CD4-positive, alpha-beta memory T cell (primary cell): ENCODE measurements at regions of chr12 and their contacts with region 1.

Region 1: GRCh38 chr12:12486661-12487240 is 75.9 kb downstream of the DUSP16 start:
- DNase-seq: no peak
- H3K4me3 ChIP-seq: no peak overlapping the region
- H3K4me3 Mint-ChIP-seq: peak overlapping the region in 6 of 8 donors; percentile 14 to 65 (median 28)
- H3K27ac ChIP-seq: peak overlapping the region; percentile 40
- H3K27ac Mint-ChIP-seq: peak overlapping the region; percentile 84 to 99 (median 92)
- H3K4me1 ChIP-seq: peaks cover 78% of the 10 kb centered on the region
- H3K4me1 Mint-ChIP-seq: peaks cover 36 to 70% (median 56%) of the 10 kb centered on the region in 4 donors
- H3K27me3 ChIP-seq: no peaks in the 10 kb centered on the region
- H3K27me3 Mint-ChIP-seq: no peaks in the 10 kb centered on the region

Region 2: GRCh38 chr12:11986165-11986564 is 500.6 kb before region 1 on chr12:
- CTCF ChIA-PET with region 1: no interaction called
- POLR2A ChIA-PET with region 1: no interaction called
- intact Hi-C with region 1: no loop called
- DNase-seq: no peak
- H3K4me3 ChIP-seq: no peak overlapping the region
- H3K4me3 Mint-ChIP-seq: no peak overlapping the region
- H3K27ac ChIP-seq: no peak overlapping the region
- H3K27ac Mint-ChIP-seq: peak overlapping the region in 3 of 7 donors; percentile 0 to 47 (median 21)
- H3K4me1 ChIP-seq: peaks cover 31% of the 10 kb centered on the region
- H3K4me1 Mint-ChIP-seq: peaks cover 26 to 33% (median 31%) of the 10 kb centered on the region in 4 donors
- H3K27me3 ChIP-seq: no peaks in the 10 kb centered on the region
- H3K27me3 Mint-ChIP-seq: no peaks in the 10 kb centered on the region

Region 3: GRCh38 chr12:12091977-12092663 is 394.6 kb before region 1 on chr12:
- CTCF ChIA-PET with region 1: no interaction called
- POLR2A ChIA-PET with region 1: no interaction called
- intact Hi-C with region 1: no loop called
- DNase-seq: no peak
- H3K4me3 ChIP-seq: no peak overlapping the region
- H3K4me3 Mint-ChIP-seq: no peak overlapping the region
- H3K27ac ChIP-seq: no peak overlapping the region
- H3K27ac Mint-ChIP-seq: no peak overlapping the region
- H3K4me1 ChIP-seq: no peaks in the 10 kb centered on the region
- H3K4me1 Mint-ChIP-seq: no peaks in the 10 kb centered on the region
- H3K27me3 ChIP-seq: no peaks in the 10 kb centered on the region
- H3K27me3 Mint-ChIP-seq: peaks cover 0 to 5% of the 10 kb centered on the region in 2 donors

Region 4: GRCh38 chr12:12384571-12385340 is 102.0 kb before region 1 on chr12:
- CTCF ChIA-PET with region 1: interaction called, 41 read pairs
- POLR2A ChIA-PET with region 1: interaction called, 107 read pairs
- intact Hi-C with region 1: loop called (anchors 1 kb)
- DNase-seq: peak in 4 of 5 donors; percentile 46 to 48 (median 47)
- H3K4me3 ChIP-seq: peak overlapping the region in 1 of 2 donors; percentile 9
- H3K4me3 Mint-ChIP-seq: peak overlapping the region; percentile 59 to 85 (median 74)
- H3K27ac ChIP-seq: peak overlapping the region; percentile 50
- H3K27ac Mint-ChIP-seq: peak overlapping the region; percentile 86 to 99 (median 96)
- H3K4me1 ChIP-seq: peaks cover 87% of the 10 kb centered on the region
- H3K4me1 Mint-ChIP-seq: peaks cover 46 to 87% (median 68%) of the 10 kb centered on the region in 4 donors
- H3K27me3 ChIP-seq: no peaks in the 10 kb centered on the region
- H3K27me3 Mint-ChIP-seq: no peaks in the 10 kb centered on the region

Region 5: DNA sequence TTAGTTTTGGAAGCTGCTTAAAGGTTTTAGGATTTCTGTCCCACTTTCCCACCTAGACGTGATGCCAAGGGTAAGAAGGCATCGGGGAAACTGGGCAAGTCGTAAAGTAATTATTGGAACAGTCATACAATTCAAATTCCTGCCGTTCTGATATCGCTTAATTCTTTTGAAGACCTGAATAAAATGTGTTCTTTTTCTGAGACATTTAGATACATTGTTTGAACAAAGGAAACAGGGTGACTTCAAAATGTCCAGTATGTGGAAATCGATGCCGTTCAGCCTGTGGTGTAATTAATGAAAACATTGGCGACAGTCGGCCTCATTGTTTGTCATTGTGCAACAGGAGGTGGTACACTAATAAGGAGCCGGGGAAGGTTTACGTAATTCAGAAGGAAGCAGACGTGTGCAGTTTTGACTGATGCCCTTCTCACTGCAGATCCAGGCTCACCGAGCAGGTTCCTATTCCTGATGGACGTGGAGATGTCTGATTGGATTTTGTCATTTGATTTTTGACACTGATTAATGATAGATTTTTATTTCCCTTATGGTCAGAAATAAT is 37.2 kb before region 1 on chr12:
- CTCF ChIA-PET with region 1: no interaction called
- POLR2A ChIA-PET with region 1: interaction called, 970 read pairs
- intact Hi-C with region 1: no loop called
- DNase-seq: no peak
- H3K4me3 ChIP-seq: no peak overlapping the region
- H3K4me3 Mint-ChIP-seq: no peak overlapping the region
- H3K27ac ChIP-seq: no peak overlapping the region
- H3K27ac Mint-ChIP-seq: peak overlapping the region in 5 of 7 donors; percentile 43 to 75 (median 51)
- H3K4me1 ChIP-seq: peaks cover 30% of the 10 kb centered on the region
- H3K4me1 Mint-ChIP-seq: peaks cover 20 to 49% (median 38%) of the 10 kb centered on the region in 4 donors
- H3K27me3 ChIP-seq: no peaks in the 10 kb centered on the region
- H3K27me3 Mint-ChIP-seq: no peaks in the 10 kb centered on the region

Region 6: GRCh38 chr12:12499909-12500604 is 13.3 kb after region 1 on chr12:
- CTCF ChIA-PET with region 1: interaction called, 8 read pairs
- POLR2A ChIA-PET with region 1: interaction called, 48 read pairs
- intact Hi-C with region 1: loop called (anchors 1 kb)
- DNase-seq: peak in 1 of 5 donors; percentile 44
- H3K4me3 ChIP-seq: no peak overlapping the region
- H3K4me3 Mint-ChIP-seq: peak overlapping the region in 5 of 8 donors; percentile 21 to 50 (median 41)
- H3K27ac ChIP-seq: peak overlapping the region; percentile 27
- H3K27ac Mint-ChIP-seq: peak overlapping the region; percentile 8 to 96 (median 88)
- H3K4me1 ChIP-seq: peaks cover 74% of the 10 kb centered on the region
- H3K4me1 Mint-ChIP-seq: peaks cover 41 to 75% (median 58%) of the 10 kb centered on the region in 4 donors
- H3K27me3 ChIP-seq: no peaks in the 10 kb centered on the region
- H3K27me3 Mint-ChIP-seq: no peaks in the 10 kb centered on the region

Region 7: DNA sequence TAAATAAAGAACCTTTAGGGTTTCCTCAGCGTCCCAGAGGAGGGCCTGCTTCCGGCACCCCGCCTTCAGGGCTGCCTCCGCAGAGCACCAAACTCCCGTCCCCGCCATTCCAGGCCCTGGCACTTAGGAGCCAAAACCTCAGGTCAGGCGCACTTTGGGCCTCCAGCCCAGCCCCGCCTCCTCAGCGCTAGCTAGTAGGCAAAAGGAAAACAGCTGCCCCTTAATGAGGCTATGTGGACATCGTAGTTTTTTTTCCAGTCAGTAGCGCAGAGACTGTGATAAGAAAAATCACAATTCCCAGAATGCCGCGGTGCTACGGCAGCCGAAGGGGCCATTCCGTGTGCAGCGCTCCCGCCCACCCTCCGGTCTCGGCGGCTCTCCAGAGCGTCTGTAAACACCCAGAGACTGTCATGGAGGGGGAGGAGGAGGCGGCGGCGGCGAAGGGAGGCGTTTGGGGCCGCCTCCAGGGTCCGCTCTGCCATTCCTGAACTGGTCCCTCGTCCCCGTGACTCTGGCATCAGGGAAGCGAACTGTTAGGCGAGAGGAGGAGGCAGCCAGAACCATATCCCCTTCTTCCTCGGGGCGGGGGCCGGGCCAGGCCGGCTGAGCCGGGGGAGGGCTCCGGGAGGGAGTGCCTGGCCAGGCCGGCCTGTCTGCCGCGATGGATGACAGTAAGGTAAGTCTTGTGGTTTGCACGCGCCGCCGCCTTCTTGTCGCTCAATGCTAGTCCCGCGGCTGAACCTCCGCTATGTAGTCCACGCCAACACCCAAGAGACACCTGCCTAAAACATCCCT is 125.0 kb after region 1 on chr12 and contains the start of gene CREBL2:
- CTCF ChIA-PET with region 1: no interaction called
- POLR2A ChIA-PET with region 1: interaction called, 4 read pairs
- intact Hi-C with region 1: loop called (anchors 2 kb)
- DNase-seq: peak; percentile 88 to 89 (median 88)
- H3K4me3 ChIP-seq: peak within 1 kb of the TSS; percentile 92 to 97
- H3K4me3 Mint-ChIP-seq: peak within 1 kb of the TSS; percentile 92 to 99 (median 95)
- H3K27ac ChIP-seq: peak within 1 kb of the TSS; percentile 77
- H3K27ac Mint-ChIP-seq: peak within 1 kb of the TSS; percentile 93 to 99 (median 99)
- H3K4me1 ChIP-seq: peaks cover 66% of the 10 kb centered on the region
- H3K4me1 Mint-ChIP-seq: peaks cover 34 to 73% (median 54%) of the 10 kb centered on the region in 4 donors
- H3K27me3 ChIP-seq: no peaks in the 10 kb centered on the region
- H3K27me3 Mint-ChIP-seq: no peaks in the 10 kb centered on the region
- total RNA-seq, gene CREBL2: 51.0 to 52.0 TPM

Region 8: GRCh38 chr12:12696562-12697383 is 210.0 kb after region 1 on chr12:
- CTCF ChIA-PET with region 1: no interaction called
- POLR2A ChIA-PET with region 1: interaction called, 9 read pairs
- intact Hi-C with region 1: loop called (anchors 1 kb)
- DNase-seq: peak; percentile 93 to 96 (median 95)
- H3K4me3 ChIP-seq: peak overlapping the region; percentile 37 to 74
- H3K4me3 Mint-ChIP-seq: peak overlapping the region; percentile 86 to 97 (median 94)
- H3K27ac ChIP-seq: peak overlapping the region; percentile 87
- H3K27ac Mint-ChIP-seq: peak overlapping the region; percentile 98 to 100 (median 100)
- H3K4me1 ChIP-seq: peaks cover 24% of the 10 kb centered on the region
- H3K4me1 Mint-ChIP-seq: peaks cover 16 to 41% (median 30%) of the 10 kb centered on the region in 4 donors
- H3K27me3 ChIP-seq: no peaks in the 10 kb centered on the region
- H3K27me3 Mint-ChIP-seq: no peaks in the 10 kb centered on the region